ENCODE measurements at regions of chr21 and their contacts with region 1.

Region 1: DNA sequence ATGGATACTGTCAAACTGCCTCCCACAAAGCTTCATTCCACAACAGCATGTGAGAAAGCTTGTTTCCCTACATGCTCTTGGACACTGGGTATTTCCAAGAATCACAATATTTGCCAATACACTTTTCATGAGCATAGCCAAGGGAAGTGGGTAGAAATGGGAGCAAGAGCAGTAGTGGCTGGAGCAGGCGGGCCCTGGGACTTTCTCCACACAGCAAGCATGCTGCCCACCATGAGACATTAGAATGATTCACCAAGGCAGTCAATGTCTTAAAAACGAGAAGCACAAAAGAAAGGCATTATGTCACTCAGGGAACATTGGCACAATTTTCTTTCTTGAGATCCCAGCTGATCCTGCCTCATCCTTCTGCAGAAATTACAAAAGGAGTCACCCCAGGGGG is 371.6 kb upstream of the RUNX1 start:
- DNase-seq: no peak
- ATAC-seq: no peak
- H3K4me3 ChIP-seq: no peak overlapping the region
- H3K4me3 Mint-ChIP-seq: no peak overlapping the region
- H3K27ac ChIP-seq: no peak overlapping the region
- H3K27ac Mint-ChIP-seq: no peak overlapping the region
- H3K4me1 ChIP-seq: no peaks in the 10 kb centered on the region
- H3K4me1 Mint-ChIP-seq: no peaks in the 10 kb centered on the region
- H3K27me3 ChIP-seq: no peaks in the 10 kb centered on the region
- H3K27me3 Mint-ChIP-seq: no peaks in the 10 kb centered on the region
- CTCF ChIP-seq: no peak

Region 2: DNA sequence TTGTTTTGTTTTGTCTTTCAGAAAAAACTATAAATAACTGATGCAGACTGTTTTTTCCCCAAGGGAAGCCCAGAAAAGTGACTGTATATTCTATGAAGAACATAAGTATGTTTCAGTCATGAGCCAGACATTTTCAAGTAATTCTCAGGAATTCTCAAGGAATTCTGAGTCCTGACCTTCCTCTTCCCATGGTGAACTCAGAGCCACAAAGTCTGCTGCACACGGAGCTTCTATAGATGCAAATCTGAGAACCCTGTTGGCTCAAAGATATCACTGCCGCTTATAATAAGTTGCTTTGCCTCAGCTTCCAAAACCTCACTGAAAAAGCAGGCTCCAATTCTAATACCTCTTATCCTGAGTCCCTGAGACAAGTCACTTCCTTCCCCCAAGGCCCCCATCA is 46.9 kb after region 1 on chr21:
- CTCF ChIA-PET with region 1: no interaction called
- POLR2A ChIA-PET with region 1: no interaction called
- intact Hi-C with region 1: no loop called
- DNase-seq: no peak
- ATAC-seq: no peak
- H3K4me3 ChIP-seq: no peak overlapping the region
- H3K4me3 Mint-ChIP-seq: no peak overlapping the region
- H3K27ac ChIP-seq: no peak overlapping the region
- H3K27ac Mint-ChIP-seq: no peak overlapping the region
- H3K4me1 ChIP-seq: no peaks in the 10 kb centered on the region
- H3K4me1 Mint-ChIP-seq: no peaks in the 10 kb centered on the region
- H3K27me3 ChIP-seq: no peaks in the 10 kb centered on the region
- H3K27me3 Mint-ChIP-seq: no peaks in the 10 kb centered on the region
- CTCF ChIP-seq: no peak

Region 3: DNA sequence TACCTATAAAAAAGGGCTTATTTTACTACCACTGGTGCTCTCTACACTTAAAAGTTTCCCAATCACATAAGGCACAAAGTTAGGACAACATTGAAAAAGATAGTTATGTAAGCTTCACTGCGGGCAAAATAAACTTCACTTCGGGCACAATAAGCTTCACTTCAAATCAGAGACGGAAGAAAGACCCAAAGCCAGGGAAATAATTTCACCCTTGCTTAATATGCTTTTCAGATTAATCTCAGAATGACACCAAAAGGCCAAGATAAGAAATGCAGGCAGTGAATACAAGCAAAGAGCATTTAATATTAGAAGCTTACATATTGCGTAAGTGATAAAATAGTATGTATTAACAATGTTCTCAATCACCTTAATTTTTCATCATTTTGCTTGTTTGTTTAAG is 195.4 kb after region 1 on chr21:
- CTCF ChIA-PET with region 1: no interaction called
- POLR2A ChIA-PET with region 1: no interaction called
- intact Hi-C with region 1: loop called in 1 of 2 experiments (anchors 1 kb)
- DNase-seq: peak in 2 of 9 experiments; percentile 11 to 24
- ATAC-seq: no peak
- H3K4me3 ChIP-seq: no peak overlapping the region
- H3K4me3 Mint-ChIP-seq: no peak overlapping the region
- H3K27ac ChIP-seq: no peak overlapping the region
- H3K27ac Mint-ChIP-seq: no peak overlapping the region
- H3K4me1 ChIP-seq: no peaks in the 10 kb centered on the region
- H3K4me1 Mint-ChIP-seq: peaks cover 2% of the 10 kb centered on the region
- H3K27me3 ChIP-seq: no peaks in the 10 kb centered on the region
- H3K27me3 Mint-ChIP-seq: no peaks in the 10 kb centered on the region
- CTCF ChIP-seq: peak; percentile 28

Measured in CD8-positive, alpha-beta T cell (primary cell).